Calu3 (cell line): ENCODE measurements at regions of chrX and their contacts with region 1.

Region 1: GRCh38 chrX:49754233-49754857 is 58.6 kb upstream of the PAGE1 start:
- DNase-seq: peak; percentile 36
- H3K4me3 Mint-ChIP-seq: no peak overlapping the region
- H3K27ac Mint-ChIP-seq: no peak overlapping the region
- H3K4me1 Mint-ChIP-seq: no peaks in the 10 kb centered on the region
- H3K27me3 Mint-ChIP-seq: peaks cover 66% of the 10 kb centered on the region
- CTCF ChIP-seq: peak; percentile 60

Region 2: DNA sequence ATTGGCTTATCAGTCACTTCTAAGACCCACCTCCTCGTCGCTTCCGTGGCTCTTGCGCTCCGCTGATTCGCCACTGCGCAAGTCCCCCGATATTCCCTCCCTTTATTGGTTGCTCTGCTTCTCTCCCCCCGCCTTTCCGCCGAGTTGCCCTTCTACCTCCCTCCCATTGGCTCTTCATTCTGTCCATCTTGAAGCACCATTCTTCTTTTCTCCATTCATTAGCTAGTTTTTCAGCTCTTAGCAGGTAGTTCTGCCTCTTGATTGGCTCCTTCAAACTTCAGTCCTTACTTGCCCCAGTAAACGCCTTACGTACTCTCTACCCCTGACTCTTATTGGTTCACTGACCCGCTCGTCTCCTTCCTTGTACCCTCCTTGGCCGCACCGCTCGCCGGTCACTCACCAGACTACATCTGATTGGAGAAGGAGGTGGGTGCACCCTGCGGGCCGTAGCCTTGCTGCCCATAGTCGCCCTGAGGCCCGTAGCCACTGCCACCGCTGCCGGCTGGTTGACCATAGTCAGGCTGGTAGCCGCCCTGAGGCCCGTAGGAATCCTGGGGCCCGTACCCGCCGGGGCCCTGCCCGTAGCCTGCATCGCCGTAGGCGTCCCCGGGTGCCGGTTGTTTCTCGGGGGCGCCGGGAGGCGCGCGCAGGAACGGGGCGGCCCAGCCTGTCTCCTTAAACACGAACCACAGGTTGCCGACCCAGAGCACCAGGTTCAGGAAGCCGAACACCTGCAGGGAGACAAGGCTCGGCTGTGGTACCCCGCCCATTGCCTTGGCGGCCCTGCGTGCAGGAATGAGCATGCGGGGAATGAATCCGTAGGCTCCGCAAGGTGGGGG is 563.1 kb before region 1 on chrX:
- CTCF ChIA-PET with region 1: no interaction called
- intact Hi-C with region 1: loop called (anchors 10 kb)
- DNase-seq: peak; percentile 90
- H3K4me3 Mint-ChIP-seq: peak overlapping the region; percentile 75
- H3K27ac Mint-ChIP-seq: peak overlapping the region; percentile 99
- H3K4me1 Mint-ChIP-seq: peaks cover 24% of the 10 kb centered on the region
- H3K27me3 Mint-ChIP-seq: peaks cover 9% of the 10 kb centered on the region
- CTCF ChIP-seq: no peak

Region 3: DNA sequence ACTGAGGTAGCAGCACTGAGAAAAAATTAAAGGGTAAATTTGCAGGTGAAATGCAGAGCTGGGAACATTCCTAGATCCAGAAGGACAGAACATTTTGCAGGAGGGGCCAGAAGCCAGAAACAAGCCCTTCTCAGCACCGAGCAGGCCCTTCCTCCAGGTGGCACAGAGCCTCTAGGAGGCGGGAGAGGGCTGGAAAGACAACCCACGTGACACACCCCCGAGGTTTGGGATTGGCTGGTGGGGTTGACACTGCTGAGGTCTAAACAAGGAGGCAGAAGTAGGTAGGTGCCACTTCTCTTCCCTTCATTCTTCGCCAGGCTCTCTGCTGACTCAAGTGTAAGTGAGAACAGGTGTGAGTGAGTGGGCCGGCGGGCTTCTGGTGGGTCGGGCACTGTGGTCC is 74.7 kb after region 1 on chrX and contains the start of gene PAGE4:
- CTCF ChIA-PET with region 1: no interaction called
- intact Hi-C with region 1: no loop called
- DNase-seq: peak; percentile 2
- H3K4me3 Mint-ChIP-seq: no peak within 1 kb of the TSS
- H3K27ac Mint-ChIP-seq: no peak within 1 kb of the TSS
- H3K4me1 Mint-ChIP-seq: no peaks in the 10 kb centered on the region
- H3K27me3 Mint-ChIP-seq: peaks cover 28% of the 10 kb centered on the region
- CTCF ChIP-seq: no peak
- total RNA-seq, gene PAGE4: not detected in 2 replicates

Region 4: DNA sequence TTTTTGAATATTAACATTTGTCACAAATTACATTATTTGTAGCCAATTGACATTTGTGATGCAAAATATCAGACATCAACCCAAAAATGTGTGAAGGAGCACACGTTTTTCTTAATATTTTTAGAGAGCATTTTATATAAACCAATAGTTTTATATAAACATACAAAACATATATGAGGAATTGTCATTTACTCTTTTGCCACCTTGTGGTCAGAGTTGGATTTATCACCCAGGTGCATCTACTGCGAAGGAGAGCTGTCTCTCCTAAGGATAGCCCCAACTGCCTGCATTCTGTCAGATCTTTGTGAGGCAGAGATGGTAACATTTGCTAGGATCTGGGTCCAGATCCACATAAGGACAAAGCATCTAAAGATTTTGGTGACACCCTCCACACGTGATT is 122.4 kb after region 1 on chrX:
- CTCF ChIA-PET with region 1: no interaction called
- intact Hi-C with region 1: no loop called
- DNase-seq: peak; percentile 42
- H3K4me3 Mint-ChIP-seq: no peak overlapping the region
- H3K27ac Mint-ChIP-seq: no peak overlapping the region
- H3K4me1 Mint-ChIP-seq: no peaks in the 10 kb centered on the region
- H3K27me3 Mint-ChIP-seq: no peaks in the 10 kb centered on the region
- CTCF ChIP-seq: peak; percentile 39